ENCODE measurements at regions of chr14 and their contacts with region 1.

Region 1: DNA sequence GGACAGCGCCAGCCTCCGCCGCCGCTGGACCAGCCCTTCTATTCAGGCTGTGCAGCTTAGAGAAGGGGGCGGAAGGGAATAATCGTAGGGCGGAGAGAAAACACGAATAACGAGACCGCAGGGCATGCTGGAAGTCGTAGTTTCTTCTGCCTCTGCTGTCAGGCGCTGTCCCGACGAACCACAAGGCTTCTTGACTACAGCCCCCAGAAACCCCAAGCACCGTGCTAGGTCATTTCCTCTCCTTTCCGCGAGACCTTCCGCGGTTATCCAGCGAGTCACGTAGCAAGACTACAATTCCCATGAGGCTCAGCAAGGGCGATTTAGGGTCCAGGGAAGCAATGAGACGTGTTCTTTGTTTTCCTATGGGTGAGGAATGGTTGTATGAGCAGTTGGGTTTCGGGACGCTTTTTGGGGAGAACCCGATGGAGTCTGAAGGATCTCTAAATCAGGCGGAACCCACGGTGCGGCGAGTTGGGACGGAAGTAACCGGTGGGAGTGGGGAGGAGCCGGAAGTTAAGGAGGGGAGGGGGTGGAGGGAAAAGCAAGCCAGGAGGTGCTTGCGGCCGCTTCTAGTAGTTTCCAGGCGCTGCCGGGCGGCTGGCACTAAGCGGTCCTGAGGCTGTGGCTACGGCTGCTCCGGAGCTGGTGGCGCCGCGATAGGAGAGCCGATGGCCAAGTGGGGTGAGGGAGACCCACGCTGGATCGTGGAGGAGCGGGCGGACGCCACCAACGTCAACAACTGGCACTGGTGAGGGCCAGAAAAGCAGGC is at the starts of genes AHSA1 and VIPAS39:
- DNase-seq: peak; percentile 95 to 97 (median 95)
- ATAC-seq: peak; percentile 99
- H3K4me3 ChIP-seq: peak within 1 kb of the TSS; percentile 82
- H3K27ac ChIP-seq: peak within 1 kb of the TSS; percentile 95
- H3K4me1 ChIP-seq: no peaks in the 10 kb centered on the region
- H3K27me3 ChIP-seq: no peaks in the 10 kb centered on the region
- total RNA-seq, gene AHSA1: 115 to 211 (median 175) TPM
- total RNA-seq, gene VIPAS39: 10.6 to 14.7 (median 11.9) TPM

Region 2: DNA sequence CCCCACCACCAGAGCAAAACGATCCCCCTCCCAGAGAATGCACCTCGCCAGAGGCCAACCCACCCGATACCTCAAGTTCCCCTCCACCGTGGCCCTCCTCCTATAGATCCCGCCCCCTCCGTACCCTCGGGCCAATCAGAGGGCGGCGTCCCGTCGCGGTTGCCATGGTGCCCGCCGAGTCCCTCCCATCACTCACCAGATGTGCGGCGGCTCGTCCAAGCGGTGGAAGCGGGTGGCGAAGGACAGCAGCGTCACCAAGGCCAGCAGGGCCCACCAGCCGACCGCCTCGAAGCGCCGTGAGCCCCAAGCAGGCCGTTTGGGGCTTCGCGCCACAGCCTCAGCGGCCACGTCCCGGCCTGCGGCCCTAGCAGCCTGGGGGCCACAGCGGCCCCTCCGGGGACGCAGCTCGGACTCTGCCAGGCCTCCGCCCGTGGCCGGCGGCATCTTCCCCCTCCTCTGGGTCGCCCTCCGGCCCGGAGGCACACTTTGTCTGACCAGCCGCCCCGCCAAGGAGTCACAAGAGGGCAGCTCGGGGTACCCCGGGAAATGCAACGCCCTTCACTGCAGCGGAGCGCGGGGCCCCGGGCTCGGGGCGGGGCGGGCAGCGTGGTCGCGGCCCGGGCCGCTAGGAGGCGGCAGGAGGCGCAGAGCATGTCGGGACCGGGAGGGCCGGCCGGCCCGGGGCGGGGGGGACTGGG is 137.3 kb before region 1 on chr14 and contains the start of gene POMT2:
- intact Hi-C with region 1: loop called in 1 of 4 experiments (anchors 5 kb)
- DNase-seq: peak; percentile 95 to 98 (median 97)
- ATAC-seq: peak; percentile 88 to 89
- H3K4me3 ChIP-seq: peak within 1 kb of the TSS; percentile 78
- H3K27ac ChIP-seq: peak within 1 kb of the TSS; percentile 85
- H3K4me1 ChIP-seq: peaks cover 6% of the 10 kb centered on the region
- H3K27me3 ChIP-seq: no peaks in the 10 kb centered on the region
- total RNA-seq, gene POMT2: 15.2 to 21.9 (median 17.9) TPM

Region 3: DNA sequence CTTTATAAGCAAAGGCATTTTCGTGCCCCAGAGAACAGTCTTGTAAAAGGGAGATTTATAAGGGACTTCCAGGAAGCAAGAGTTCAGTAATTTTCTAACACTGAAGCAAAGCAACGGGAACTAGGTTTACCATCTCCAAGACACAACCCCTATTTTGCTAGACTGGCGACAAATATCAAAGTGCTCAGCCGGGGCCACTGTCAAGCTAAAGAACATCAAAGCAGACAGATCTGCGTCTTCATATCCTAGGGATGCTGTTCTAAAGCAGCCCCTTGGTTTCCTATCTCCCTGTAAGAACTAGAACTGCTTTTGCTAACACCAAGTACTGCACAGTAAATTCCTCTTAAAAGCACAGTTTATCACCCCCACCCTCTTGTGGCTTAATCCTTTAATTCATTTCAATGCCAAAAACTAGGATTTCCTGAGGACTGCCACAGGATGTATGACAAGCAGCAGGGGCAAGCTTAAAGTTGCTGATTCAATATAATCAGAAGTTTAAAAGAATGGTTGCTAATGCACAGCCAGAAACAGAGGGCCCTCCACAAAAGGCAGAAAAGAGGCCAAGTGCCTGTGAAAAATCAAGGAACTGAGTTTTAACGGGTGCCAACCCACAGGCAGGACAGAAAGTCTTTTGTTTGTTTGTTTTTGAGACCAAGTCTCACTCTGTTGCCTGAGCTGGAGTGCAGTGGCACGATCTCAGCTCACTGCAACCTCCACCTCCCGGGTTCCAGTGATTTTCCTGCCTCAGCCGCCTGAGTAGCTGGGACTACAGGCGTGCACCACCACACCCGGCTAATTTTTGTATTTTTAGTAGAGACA is 84.9 kb after region 1 on chr14:
- intact Hi-C with region 1: loop called in 1 of 4 experiments (anchors 10 kb)
- DNase-seq: no peak
- ATAC-seq: peak; percentile 78 to 90
- H3K4me3 ChIP-seq: no peak overlapping the region
- H3K27ac ChIP-seq: peak overlapping the region; percentile 14
- H3K4me1 ChIP-seq: peaks cover 2% of the 10 kb centered on the region
- H3K27me3 ChIP-seq: no peaks in the 10 kb centered on the region

Region 4: GRCh38 chr14:77554816-77555599 is 97.3 kb after region 1 on chr14:
- intact Hi-C with region 1: no loop called
- DNase-seq: peak; percentile 46 to 77 (median 66)
- ATAC-seq: peak; percentile 68 to 94
- H3K4me3 ChIP-seq: no peak overlapping the region
- H3K27ac ChIP-seq: no peak overlapping the region
- H3K4me1 ChIP-seq: no peaks in the 10 kb centered on the region
- H3K27me3 ChIP-seq: no peaks in the 10 kb centered on the region